Activated T-helper 1 cell treated with anti-CD3 and anti-CD28 coated beads, Interleukin-12 subunit alpha, Interleukin-12 subunit beta, Interleukin-2, Interleukin-4 antibody, amounts not matched to agents 30 ng/mL and 10 ng/mL and 1 ng/mL, durations not matched to agents 14 hours and 24 hours and 36 hours (primary cell): ENCODE measurements at regions of chr2 and their contacts with region 1.

Region 1: GRCh38 chr2:63588385-63589147 is at the starts of genes MDH1 and WDPCP:
- DNase-seq: peak; percentile 90
- H3K4me3 Mint-ChIP-seq: peak within 1 kb of the TSS; percentile 97
- H3K27ac Mint-ChIP-seq: peak within 1 kb of the TSS; percentile 90
- H3K4me1 Mint-ChIP-seq: peaks cover 38% of the 10 kb centered on the region
- H3K27me3 Mint-ChIP-seq: no peaks in the 10 kb centered on the region
- total RNA-seq, gene MDH1: 186 and 197 TPM in 2 replicates
- total RNA-seq, gene WDPCP: 5.2 and 7.7 TPM in 2 replicates

Region 2: GRCh38 chr2:61888267-61889055 is 1700.1 kb before region 1 on chr2 and contains the start of gene CCT4:
- intact Hi-C with region 1: loop called (anchors 1 kb)
- DNase-seq: peak; percentile 86
- H3K4me3 Mint-ChIP-seq: peak within 1 kb of the TSS; percentile 95
- H3K27ac Mint-ChIP-seq: peak within 1 kb of the TSS; percentile 97
- H3K4me1 Mint-ChIP-seq: peaks cover 23% of the 10 kb centered on the region
- H3K27me3 Mint-ChIP-seq: no peaks in the 10 kb centered on the region
- total RNA-seq, gene CCT4: 354 and 381 TPM in 2 replicates

Region 3: DNA sequence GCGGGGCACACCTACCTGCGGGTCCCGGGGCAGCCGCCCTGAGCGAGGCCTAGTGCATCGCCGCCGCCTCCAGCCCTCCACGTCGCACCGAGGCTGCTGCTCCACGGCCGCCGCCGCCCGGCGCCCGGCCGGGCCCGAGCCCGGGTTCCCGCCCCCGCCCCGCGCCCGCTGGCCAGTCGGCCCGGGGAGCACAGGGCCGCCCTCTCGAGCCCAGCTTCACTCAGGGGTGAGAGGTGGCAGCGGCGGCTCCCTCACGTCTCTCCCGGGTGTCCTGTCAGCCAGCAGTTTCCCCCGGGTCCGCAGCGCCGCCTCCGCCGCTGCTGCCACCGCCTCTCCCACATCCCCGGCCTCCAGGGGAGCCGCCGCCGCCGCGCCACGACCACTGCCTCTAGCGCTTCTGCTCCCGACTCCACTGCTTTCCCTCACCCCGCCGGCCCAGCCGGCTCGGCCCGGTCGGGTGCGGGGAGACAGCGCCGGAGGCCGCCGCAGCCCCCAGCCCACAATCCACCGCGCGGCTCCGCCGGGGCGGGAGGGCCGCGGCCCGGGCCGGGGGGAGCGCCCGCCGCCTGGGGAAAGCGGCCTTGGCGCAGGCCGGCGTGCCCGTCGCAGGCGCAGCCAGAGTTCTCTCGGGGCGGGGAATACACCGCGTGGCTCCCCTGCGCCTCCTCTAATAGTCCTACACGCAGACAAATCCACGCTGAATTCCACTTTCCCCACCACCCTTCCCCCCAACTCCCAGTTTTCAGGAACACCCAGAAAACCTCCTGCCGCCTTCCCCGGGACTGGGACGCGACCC is 430.6 kb after region 1 on chr2 and contains the start of gene VPS54:
- intact Hi-C with region 1: loop called (anchors 1 kb)
- DNase-seq: peak; percentile 53
- H3K4me3 Mint-ChIP-seq: peak within 1 kb of the TSS; percentile 94
- H3K27ac Mint-ChIP-seq: peak within 1 kb of the TSS; percentile 97
- H3K4me1 Mint-ChIP-seq: peaks cover 43% of the 10 kb centered on the region
- H3K27me3 Mint-ChIP-seq: no peaks in the 10 kb centered on the region
- total RNA-seq, gene VPS54: 14.9 and 15.4 TPM in 2 replicates

Region 4: GRCh38 chr2:64730551-64731262 is 1142.1 kb after region 1 on chr2:
- intact Hi-C with region 1: loop called (anchors 10 kb)
- DNase-seq: peak; percentile 35
- H3K4me3 Mint-ChIP-seq: peak overlapping the region; percentile 85
- H3K27ac Mint-ChIP-seq: peak overlapping the region; percentile 89
- H3K4me1 Mint-ChIP-seq: peaks cover 77% of the 10 kb centered on the region
- H3K27me3 Mint-ChIP-seq: no peaks in the 10 kb centered on the region

Region 5: GRCh38 chr2:65129826-65130663 is 1541.5 kb after region 1 on chr2 and contains the start of gene RAB1A:
- intact Hi-C with region 1: loop called (anchors 1 kb)
- DNase-seq: peak; percentile 98
- H3K4me3 Mint-ChIP-seq: peak within 1 kb of the TSS; percentile 98
- H3K27ac Mint-ChIP-seq: peak within 1 kb of the TSS; percentile 99
- H3K4me1 Mint-ChIP-seq: peaks cover 30% of the 10 kb centered on the region
- H3K27me3 Mint-ChIP-seq: peaks cover 16% of the 10 kb centered on the region
- total RNA-seq, gene RAB1A: 73.4 and 81.6 TPM in 2 replicates